ENCODE measurements at regions of chr17 and their contacts with region 1.

Region 1: DNA sequence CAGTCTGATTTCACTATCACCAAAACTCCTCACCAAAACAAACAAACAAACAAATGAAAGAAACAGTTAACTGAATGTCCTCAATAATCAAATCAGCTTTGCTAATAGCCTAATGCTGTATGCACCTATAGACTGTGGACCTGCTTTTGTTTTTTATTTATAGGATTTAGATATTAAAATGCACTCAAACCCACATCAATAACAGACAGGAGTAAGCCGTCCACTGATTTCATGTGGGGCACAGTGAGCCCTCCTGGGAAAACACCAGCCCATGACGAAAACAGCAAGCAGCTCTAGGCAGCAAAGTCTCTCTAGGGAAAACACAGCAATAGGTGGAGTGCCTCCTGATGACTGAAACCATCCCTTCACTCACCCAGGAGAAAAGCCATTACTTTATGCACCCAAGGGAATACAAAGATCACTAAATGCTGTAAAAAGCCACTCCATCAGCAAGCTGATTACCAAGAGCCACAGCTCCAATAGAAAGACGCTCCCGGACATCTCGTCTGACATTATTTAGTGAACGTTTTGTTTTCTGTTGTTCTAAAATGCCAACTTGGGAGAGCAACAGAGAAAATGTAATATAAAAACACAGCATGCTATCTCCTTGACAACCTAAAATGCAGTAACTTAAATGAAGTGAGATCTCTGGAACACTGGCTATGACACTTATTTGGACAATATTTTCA is 47.8 kb downstream of the ANKFY1 start:
- DNase-seq: no peak
- H3K4me3 ChIP-seq: no peak overlapping the region
- H3K4me3 Mint-ChIP-seq: no peak overlapping the region
- H3K27ac Mint-ChIP-seq: no peak overlapping the region
- H3K4me1 ChIP-seq: no peaks in the 10 kb centered on the region
- H3K4me1 Mint-ChIP-seq: no peaks in the 10 kb centered on the region
- H3K27me3 ChIP-seq: no peaks in the 10 kb centered on the region
- H3K27me3 Mint-ChIP-seq: no peaks in the 10 kb centered on the region
- CTCF ChIP-seq: no peak

Region 2: DNA sequence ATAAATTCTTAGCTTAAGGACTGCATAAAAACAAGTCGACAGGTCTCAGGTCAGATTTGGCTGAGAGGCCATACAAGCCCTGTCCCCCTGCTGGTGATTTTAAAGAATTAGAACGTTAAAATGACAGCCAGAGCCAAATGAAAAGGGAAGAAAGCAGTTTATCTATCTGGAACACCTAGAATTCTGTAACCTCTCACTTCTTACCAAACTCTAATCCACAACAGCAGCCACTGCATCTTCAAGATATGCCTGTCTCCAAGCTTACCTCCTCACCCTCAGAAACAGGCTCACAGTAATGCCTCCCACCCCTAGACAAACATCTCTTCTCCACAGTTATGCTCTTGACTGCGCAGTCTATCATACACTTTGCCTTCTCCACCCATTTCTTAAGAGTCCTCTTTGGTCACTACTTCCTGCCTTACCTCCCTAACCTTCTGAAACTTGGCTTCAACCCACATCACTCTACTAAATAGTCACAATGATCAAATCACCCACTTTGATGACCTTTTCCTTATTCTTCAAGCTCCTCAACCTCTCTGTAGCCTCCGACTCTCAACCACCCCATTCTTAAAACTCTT is 33.5 kb after region 1 on chr17:
- CTCF ChIA-PET with region 1: interaction called, 10 read pairs
- POLR2A ChIA-PET with region 1: no interaction called
- intact Hi-C with region 1: loop called (anchors 1 kb)
- DNase-seq: peak in 1 of 2 experiments; percentile 20
- H3K4me3 ChIP-seq: no peak overlapping the region
- H3K4me3 Mint-ChIP-seq: no peak overlapping the region
- H3K27ac Mint-ChIP-seq: no peak overlapping the region
- H3K4me1 ChIP-seq: peaks cover 29% of the 10 kb centered on the region
- H3K4me1 Mint-ChIP-seq: peaks cover 25% of the 10 kb centered on the region
- H3K27me3 ChIP-seq: no peaks in the 10 kb centered on the region
- H3K27me3 Mint-ChIP-seq: no peaks in the 10 kb centered on the region
- CTCF ChIP-seq: peak in 1 of 2 experiments; percentile 41

Region 3: GRCh38 chr17:4304417-4305027 is 88.5 kb after region 1 on chr17:
- CTCF ChIA-PET with region 1: interaction called, 6 read pairs
- POLR2A ChIA-PET with region 1: no interaction called
- intact Hi-C with region 1: loop called (anchors 1 kb)
- DNase-seq: peak in 1 of 2 experiments; percentile 32
- H3K4me3 ChIP-seq: no peak overlapping the region
- H3K4me3 Mint-ChIP-seq: no peak overlapping the region
- H3K27ac Mint-ChIP-seq: no peak overlapping the region
- H3K4me1 ChIP-seq: no peaks in the 10 kb centered on the region
- H3K4me1 Mint-ChIP-seq: no peaks in the 10 kb centered on the region
- H3K27me3 ChIP-seq: no peaks in the 10 kb centered on the region
- H3K27me3 Mint-ChIP-seq: no peaks in the 10 kb centered on the region
- CTCF ChIP-seq: peak; percentile 46 to 47

Region 4: DNA sequence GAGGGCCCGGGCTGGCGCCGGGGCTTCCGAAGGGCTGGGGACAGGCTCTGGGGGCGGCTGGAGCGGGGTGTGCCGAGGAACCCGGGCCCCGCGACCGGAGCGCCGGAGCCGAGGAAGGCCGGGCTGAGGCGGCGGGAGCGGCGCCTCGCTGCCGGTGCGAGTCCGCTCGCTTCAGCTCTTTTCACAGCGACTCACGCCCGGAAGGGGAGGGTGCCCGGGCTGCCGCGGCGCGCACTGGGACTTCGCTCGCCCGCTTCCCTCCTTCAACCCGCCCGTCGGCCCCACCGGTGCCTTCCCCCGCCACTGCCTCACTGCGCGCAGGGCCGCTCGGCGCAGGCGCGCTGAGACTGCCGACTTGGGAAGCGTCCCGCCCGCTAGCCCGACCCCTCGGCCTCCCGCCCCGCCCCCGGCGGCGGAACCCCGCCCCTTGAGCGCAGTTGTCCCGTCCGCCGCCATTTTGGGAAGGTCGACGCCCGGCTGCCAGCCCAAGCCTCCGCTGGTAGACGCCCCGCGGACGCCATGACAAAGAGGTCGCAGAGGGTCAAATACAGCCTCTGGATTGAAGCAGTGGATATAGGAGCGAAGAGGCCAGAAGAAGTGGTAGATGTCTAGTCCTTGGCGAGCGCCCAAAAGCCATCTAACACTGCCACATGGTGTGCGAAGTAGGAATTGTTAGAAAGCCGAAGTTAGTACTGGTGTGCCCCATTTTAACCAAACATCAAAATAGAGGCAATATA is 150.5 kb after region 1 on chr17 and contains the start of gene UBE2G1:
- CTCF ChIA-PET with region 1: interaction called, 4 read pairs
- POLR2A ChIA-PET with region 1: no interaction called
- intact Hi-C with region 1: loop called (anchors 1 kb)
- DNase-seq: peak; percentile 95
- H3K4me3 ChIP-seq: peak within 1 kb of the TSS; percentile 67
- H3K4me3 Mint-ChIP-seq: peak within 1 kb of the TSS; percentile 71
- H3K27ac Mint-ChIP-seq: peak within 1 kb of the TSS; percentile 75
- H3K4me1 ChIP-seq: no peaks in the 10 kb centered on the region
- H3K4me1 Mint-ChIP-seq: peaks cover 6% of the 10 kb centered on the region
- H3K27me3 ChIP-seq: no peaks in the 10 kb centered on the region
- H3K27me3 Mint-ChIP-seq: no peaks in the 10 kb centered on the region
- CTCF ChIP-seq: peak in 1 of 2 experiments; percentile 36
- total RNA-seq, gene UBE2G1: 50.5 and 56.8 TPM in 2 replicates

Region 5: DNA sequence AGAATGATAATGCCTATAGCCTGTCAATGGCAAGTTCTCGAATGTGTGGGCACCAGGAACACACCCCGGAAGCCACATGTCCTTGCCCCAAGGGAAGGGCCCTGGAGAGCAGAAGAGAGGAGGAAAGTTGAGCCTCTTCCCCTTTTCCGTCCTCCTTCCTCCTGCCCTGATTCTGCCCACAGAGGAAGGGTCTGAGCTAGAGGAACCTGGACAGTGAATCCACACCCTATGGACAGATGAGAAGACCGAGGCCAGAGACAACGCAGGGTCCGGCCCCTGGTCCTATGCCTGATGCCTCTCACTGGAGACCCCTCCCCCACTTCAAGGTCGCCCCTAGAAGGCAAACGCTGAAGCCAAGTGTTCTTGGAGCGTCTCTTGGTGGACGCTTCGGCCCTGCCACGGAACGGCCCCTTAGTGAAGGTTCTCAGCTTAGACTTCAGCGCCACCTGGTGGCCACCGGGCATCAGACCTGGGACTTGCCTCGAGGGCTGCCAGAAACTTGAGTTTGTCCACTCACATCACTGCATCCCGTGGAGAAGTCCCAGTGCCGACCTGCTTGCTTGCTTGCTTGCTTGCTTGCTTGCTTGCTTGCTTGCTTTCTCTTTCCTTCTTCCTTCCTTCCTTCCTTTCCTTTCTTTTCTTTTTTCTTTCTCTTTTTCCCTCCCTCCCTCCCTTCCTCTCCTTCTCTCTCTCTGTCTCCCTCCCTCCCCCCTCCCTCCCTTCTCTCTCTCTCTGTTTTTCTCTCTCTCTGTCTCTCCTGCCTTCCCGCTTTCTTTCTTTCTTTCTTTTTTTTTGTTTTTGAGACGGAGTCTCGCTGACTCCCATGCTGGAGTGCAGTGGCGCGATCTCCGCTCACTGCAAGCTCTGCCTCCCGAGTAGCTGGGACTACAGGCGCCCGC is 197.2 kb after region 1 on chr17:
- CTCF ChIA-PET with region 1: no interaction called
- POLR2A ChIA-PET with region 1: no interaction called
- intact Hi-C with region 1: loop called (anchors 2 kb)
- DNase-seq: peak; percentile 76 to 83
- H3K4me3 ChIP-seq: no peak overlapping the region
- H3K4me3 Mint-ChIP-seq: no peak overlapping the region
- H3K27ac Mint-ChIP-seq: no peak overlapping the region
- H3K4me1 ChIP-seq: no peaks in the 10 kb centered on the region
- H3K4me1 Mint-ChIP-seq: no peaks in the 10 kb centered on the region
- H3K27me3 ChIP-seq: no peaks in the 10 kb centered on the region
- H3K27me3 Mint-ChIP-seq: no peaks in the 10 kb centered on the region
- CTCF ChIP-seq: peak; percentile 48 to 77

Measured in Caco-2 (cell line).